ENCODE measurements at regions of chr9 and their contacts with region 1.

Region 1: GRCh38 chr9:102587952-102588351 is 407.2 kb upstream of the CYLC2 start:
- DNase-seq: no peak
- ATAC-seq: no peak
- H3K4me3 ChIP-seq: no peak overlapping the region
- H3K27ac ChIP-seq: no peak overlapping the region
- H3K4me1 ChIP-seq: no peaks in the 10 kb centered on the region
- H3K27me3 ChIP-seq: no peaks in the 10 kb centered on the region
- CTCF ChIP-seq: no peak

Region 2: GRCh38 chr9:102518324-102518723 is 69.6 kb before region 1 on chr9:
- intact Hi-C with region 1: loop called (anchors 2 kb)
- DNase-seq: no peak
- ATAC-seq: no peak
- H3K4me3 ChIP-seq: no peak overlapping the region
- H3K27ac ChIP-seq: no peak overlapping the region
- H3K4me1 ChIP-seq: no peaks in the 10 kb centered on the region
- H3K27me3 ChIP-seq: no peaks in the 10 kb centered on the region
- CTCF ChIP-seq: no peak

Measured in lower lobe of right lung (tissue), 2 donors.